Transverse colon (tissue), 4 donors: ENCODE measurements at regions of chr15 and their contacts with region 1.

Region 1: GRCh38 chr15:92355307-92355706 is 38.4 kb upstream of the ST8SIA2 start:
- DNase-seq: no peak
- H3K4me3 ChIP-seq: no peak overlapping the region
- H3K27ac ChIP-seq: no peak overlapping the region
- H3K4me1 ChIP-seq: no peaks in the 10 kb centered on the region
- H3K27me3 ChIP-seq: no peaks in the 10 kb centered on the region
- CTCF ChIP-seq: no peak
- EP300 ChIP-seq: no peak
- POLR2A ChIP-seq: no peak

Region 2: DNA sequence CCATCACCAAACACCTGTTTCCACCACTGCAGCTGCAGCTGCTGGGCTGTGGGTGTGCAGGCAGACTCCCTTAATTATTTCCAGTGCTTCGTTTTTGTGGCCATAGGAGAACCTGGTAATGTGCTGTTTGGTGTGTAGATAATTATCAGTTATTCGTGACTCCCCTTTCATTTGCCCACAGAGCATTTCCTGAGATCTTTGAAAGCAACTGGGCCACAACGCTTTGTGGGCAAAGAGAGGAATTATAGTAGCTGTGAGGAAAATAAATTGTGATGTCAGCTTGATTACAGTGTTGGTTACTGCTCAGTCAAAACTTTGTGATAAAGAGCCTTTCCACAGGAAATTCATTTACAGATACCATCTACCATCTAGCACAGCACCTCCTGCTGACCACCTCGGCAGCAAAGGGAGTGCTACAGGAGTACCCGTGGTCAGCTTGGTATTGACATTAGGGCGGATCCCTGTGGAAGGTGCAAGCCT is 695.1 kb before region 1 on chr15:
- in situ Hi-C with region 1: no loop called
- intact Hi-C with region 1: loop called (anchors 5 kb)
- DNase-seq: no peak
- H3K4me3 ChIP-seq: no peak overlapping the region
- H3K27ac ChIP-seq: no peak overlapping the region
- H3K4me1 ChIP-seq: no peaks in the 10 kb centered on the region
- H3K27me3 ChIP-seq: no peaks in the 10 kb centered on the region
- CTCF ChIP-seq: no peak
- EP300 ChIP-seq: no peak
- POLR2A ChIP-seq: no peak